HEK293 (cell line): ENCODE measurements at regions of chr5 and their contacts with region 1.

Region 1: DNA sequence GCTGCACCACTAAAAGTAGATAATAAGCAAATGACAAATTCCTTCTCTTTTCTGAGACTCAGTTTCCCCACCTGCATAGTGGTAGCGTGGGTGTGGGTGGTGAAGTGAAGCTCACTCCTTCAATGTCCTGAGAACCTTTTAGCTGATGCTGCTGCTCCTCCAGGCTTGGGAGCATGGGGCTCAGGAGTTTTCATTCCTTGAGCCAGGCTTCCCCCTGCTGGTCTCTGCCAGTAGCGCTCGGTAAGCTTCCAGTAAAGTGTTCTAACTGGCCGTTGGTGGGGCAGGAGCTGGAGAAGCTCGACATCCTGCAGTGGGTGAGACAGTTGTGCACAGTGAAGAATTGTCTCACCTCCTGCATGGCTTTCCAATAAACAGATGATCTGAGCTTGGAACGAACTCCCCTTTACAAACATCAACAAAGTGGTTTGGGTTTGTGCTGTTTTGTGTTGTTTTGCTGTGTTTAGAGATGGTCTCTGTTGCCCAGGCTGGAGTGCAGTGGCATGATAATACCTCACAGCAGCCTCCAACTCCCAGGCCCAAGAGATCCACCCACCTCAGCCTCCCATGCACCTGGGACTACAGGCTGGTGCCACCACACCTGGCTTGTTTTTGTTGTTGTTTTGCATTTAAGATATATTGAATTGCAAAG is 34.6 kb downstream of the SPARC start:
- H3K4me3 ChIP-seq: no peak overlapping the region
- H3K27ac ChIP-seq: no peak overlapping the region
- H3K4me1 ChIP-seq: no peaks in the 10 kb centered on the region
- CTCF ChIP-seq: peak; percentile 83

Region 2: DNA sequence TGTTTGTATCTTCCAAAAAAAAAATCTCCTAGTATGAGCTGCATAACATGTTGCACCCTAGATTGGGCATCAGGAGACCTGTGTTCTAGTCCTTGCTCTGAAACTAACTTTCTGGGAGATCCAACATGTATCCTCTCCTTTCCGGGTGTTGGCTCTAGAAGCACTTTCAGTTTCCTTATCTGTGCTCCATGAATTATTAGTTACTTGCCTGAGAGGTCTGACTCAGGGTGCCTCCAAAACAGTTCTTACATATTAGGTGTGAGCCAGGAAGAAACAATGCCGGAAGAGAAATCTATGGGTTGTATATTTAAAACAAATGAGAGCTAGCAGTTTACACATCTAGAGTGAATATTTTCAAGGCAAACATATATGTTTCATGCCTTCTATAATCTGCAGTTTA is 268.0 kb before region 1 on chr5:
- CTCF ChIA-PET with region 1: interaction called, 11 read pairs
- POLR2A ChIA-PET with region 1: no interaction called
- H3K4me3 ChIP-seq: no peak overlapping the region
- H3K27ac ChIP-seq: no peak overlapping the region
- H3K4me1 ChIP-seq: no peaks in the 10 kb centered on the region
- CTCF ChIP-seq: no peak

Region 3: DNA sequence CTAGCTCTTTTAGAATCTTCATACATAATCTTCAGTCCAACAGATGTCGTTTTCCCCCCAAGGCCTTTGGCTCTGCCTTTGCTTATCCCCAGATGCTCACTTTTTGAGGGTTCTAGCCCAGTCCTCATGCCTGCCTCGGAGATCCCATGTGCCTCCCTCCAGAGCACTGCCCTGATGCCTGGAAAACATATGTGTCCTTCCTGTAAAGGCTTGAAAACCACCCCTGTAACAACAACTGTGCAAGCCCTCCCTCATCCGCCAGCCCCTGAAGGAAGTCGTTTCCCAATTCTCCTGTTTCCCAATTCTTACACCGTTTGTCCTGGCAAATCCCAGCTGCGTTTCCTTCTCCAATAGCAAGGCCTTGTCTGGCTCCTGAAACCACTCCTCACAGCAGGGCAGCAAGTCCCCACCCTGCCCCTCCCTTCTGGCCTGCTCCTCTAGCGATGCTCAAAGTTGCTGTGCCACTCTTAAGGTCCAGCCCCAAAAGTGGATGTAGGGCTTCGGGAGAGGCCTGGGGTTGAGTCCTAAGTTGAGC is 152.6 kb before region 1 on chr5:
- CTCF ChIA-PET with region 1: interaction called, 21 read pairs
- POLR2A ChIA-PET with region 1: no interaction called
- H3K4me3 ChIP-seq: no peak overlapping the region
- H3K27ac ChIP-seq: no peak overlapping the region
- H3K4me1 ChIP-seq: no peaks in the 10 kb centered on the region
- CTCF ChIP-seq: no peak

Region 4: GRCh38 chr5:151637676-151638075 is 14.4 kb before region 1 on chr5:
- CTCF ChIA-PET with region 1: interaction called, 12 read pairs
- POLR2A ChIA-PET with region 1: no interaction called
- H3K4me3 ChIP-seq: no peak overlapping the region
- H3K27ac ChIP-seq: no peak overlapping the region
- H3K4me1 ChIP-seq: no peaks in the 10 kb centered on the region
- CTCF ChIP-seq: no peak

Region 5: DNA sequence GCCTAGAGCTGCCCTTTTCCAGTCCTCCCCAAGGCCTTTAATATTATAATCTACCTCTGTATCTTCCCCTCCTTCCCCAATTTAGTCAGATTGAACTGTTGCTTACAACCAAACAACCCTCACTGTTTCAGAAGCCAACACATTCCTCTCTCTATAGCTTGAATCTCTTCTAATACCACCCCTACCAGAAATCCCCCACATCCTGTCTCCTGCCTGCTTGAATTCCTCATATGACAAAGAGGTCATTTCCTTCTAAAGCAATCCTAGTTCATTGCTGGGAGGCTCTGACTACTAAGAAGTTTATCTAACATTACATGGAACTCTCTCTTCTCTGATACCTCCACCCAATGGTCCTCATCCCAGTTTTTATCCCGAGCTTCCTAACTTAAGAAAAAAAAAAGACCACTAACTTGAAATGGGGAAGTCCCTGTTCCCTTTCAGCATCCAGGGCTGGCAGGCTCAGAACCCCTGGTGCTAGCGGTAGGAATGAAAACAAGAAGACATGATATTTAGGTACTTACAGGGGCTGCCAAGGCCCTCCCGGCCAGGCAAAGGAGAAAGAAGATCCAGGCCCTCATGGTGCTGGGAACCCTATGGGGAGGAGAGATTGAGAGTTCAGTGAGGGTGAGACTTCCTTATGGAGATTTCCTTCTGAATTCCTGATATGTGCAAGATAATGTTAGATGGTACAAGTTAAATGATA is 23.6 kb after region 1 on chr5:
- CTCF ChIA-PET with region 1: interaction called, 10 read pairs
- POLR2A ChIA-PET with region 1: no interaction called
- H3K4me3 ChIP-seq: no peak overlapping the region
- H3K27ac ChIP-seq: no peak overlapping the region
- H3K4me1 ChIP-seq: peaks cover 2% of the 10 kb centered on the region; the same call in 1 of the 2 replicates
- CTCF ChIP-seq: no peak

Region 6: DNA sequence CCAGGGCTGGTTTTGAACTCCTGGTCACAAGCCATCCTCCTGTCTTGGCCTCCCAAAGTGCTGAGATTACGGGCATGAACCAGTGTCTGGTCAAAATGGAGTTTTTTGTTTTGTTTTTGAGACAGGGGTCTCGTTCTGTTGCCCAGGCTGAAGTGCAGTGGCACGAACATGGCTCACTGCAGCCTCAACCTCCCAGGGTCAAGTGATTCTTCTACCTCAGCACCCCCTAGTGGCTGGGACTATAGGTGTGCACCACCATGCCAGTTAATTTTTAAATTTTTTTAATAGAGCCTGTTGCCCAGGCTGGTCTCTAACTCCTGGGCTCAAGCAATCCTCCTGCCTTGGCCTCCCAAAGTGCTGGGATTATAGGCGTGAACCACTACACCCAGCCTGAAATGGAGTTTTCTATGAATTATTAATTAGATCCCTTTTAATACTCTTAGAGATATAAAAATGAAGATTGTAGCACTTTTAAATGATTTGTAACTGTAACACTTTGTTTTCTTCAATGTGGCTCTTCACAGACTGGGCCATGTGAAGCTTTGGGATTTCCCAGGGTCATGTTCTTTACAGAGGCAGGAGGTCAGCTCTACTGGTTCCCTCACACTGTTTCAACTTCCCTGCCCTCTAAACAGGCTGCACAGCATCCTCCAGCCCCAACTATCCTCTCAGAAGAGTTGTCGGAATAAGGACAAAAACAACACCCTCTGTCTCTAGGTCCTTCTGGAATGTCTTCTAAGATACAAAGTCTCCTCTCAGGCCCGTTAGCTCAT is 67.3 kb after region 1 on chr5:
- CTCF ChIA-PET with region 1: interaction called, 103 read pairs
- POLR2A ChIA-PET with region 1: no interaction called
- H3K4me3 ChIP-seq: no peak overlapping the region
- H3K27ac ChIP-seq: no peak overlapping the region
- H3K4me1 ChIP-seq: no peaks in the 10 kb centered on the region
- CTCF ChIP-seq: peak; percentile 22; the same call in 1 of the 2 replicates